Naive thymus-derived CD4-positive, alpha-beta T cell (primary cell): ENCODE measurements at regions of chr5 and their contacts with region 1.

Region 1: DNA sequence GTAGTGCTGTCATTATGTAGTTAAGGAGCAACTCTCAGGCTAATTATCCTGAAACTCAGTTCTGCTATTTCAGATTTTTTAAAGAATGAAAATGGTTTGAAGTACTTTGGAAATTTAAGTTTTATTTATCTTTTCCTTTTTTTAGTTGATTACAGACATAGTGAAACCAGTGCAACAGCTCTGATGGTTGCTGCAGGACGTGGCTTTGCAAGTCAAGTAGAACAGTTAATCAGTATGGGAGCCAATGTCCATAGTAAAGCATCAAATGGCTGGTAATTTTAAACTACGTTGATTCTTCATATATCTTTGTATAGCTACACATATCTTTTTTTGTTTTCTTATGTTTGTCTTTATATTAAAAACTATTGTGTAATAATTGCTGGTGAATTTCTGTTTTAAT is 34.9 kb downstream of the YTHDC2 start:
- DNase-seq: no peak
- ATAC-seq: no peak
- H3K4me3 ChIP-seq: no peak overlapping the region
- H3K4me3 Mint-ChIP-seq: no peak overlapping the region
- H3K27ac ChIP-seq: no peak overlapping the region
- H3K27ac Mint-ChIP-seq: no peak overlapping the region
- H3K4me1 ChIP-seq: no peaks in the 10 kb centered on the region
- H3K4me1 Mint-ChIP-seq: peaks cover 3 to 21% (median 9%) of the 10 kb centered on the region in 7 donors
- H3K27me3 ChIP-seq: no peaks in the 10 kb centered on the region
- H3K27me3 Mint-ChIP-seq: no peaks in the 10 kb centered on the region

Region 2: DNA sequence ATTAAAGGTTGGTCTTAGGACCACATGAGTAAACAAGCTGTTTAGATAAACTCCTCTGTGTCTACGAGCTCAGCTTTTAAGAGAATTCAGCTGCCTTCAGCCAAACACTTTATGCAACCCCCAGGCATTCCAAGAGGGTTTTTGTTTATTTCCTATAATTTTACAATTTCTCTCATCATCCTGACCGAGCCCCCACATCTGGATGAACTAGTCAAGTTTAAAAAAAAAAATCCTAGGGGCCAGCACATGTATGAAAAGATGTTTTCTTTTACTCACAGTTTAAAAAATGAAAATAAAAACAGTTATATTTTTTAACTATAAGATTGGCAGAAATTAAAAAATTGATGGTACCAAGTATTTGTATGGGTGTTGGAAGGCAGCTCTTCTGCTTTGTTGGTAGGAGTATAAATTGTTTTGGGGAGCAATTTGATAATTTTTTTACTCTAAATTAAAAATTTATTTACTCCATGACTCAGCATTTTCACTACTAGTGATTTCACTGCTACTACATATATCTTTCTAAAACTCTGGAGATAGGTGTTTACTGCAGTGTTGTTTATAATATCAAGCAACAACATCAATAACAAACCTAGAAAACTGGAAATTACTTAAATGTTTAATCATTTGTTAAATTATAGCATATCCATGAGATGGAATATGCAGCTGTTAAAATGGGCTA is 16.8 kb before region 1 on chr5:
- CTCF ChIA-PET with region 1: no interaction called
- POLR2A ChIA-PET with region 1: interaction called, 4 read pairs
- intact Hi-C with region 1: loop called in 1 of 2 experiments (anchors 2 kb)
- DNase-seq: no peak
- ATAC-seq: no peak
- H3K4me3 ChIP-seq: no peak overlapping the region
- H3K4me3 Mint-ChIP-seq: no peak overlapping the region
- H3K27ac ChIP-seq: no peak overlapping the region
- H3K27ac Mint-ChIP-seq: no peak overlapping the region
- H3K4me1 ChIP-seq: no peaks in the 10 kb centered on the region
- H3K4me1 Mint-ChIP-seq: peaks cover 0 to 11% (median 0%) of the 10 kb centered on the region in 7 donors
- H3K27me3 ChIP-seq: no peaks in the 10 kb centered on the region
- H3K27me3 Mint-ChIP-seq: no peaks in the 10 kb centered on the region

Region 3: DNA sequence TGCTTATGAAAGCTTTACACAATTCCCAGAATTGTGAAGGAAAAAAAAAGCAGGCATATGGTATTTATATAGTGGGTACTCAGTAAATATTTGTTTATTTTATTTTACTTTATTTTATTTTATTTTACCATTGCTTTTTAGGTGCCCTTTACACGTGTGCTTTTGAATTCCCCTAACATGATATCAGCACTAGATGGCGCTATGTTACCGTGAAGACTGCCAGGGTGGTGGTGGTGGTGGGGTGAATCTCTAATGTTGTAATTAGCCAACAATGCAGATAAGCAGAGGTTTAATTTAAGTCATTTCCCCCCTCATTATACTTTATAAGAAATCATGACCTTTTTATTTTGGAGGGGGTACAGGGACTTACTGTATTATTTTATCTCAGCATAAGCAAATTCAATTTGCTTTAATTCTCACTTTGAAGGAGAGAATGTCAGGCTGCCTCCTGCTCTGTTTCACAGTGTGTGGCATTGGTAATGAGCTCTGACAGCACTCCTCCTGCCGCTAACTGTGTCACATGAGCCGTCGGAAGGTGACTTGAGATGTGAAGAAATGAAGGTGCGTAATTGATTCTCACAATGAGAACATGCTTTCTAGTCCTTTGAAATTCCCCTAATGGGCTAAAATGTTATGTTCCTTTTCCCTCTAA is 130.7 kb after region 1 on chr5:
- CTCF ChIA-PET with region 1: no interaction called
- POLR2A ChIA-PET with region 1: no interaction called
- intact Hi-C with region 1: no loop called
- DNase-seq: peak in 4 of 9 donors; percentile 1 to 22 (median 4)
- ATAC-seq: peak; percentile 36
- H3K4me3 ChIP-seq: no peak overlapping the region
- H3K4me3 Mint-ChIP-seq: no peak overlapping the region
- H3K27ac ChIP-seq: no peak overlapping the region
- H3K27ac Mint-ChIP-seq: no peak overlapping the region
- H3K4me1 ChIP-seq: no peaks in the 10 kb centered on the region
- H3K4me1 Mint-ChIP-seq: no peaks in the 10 kb centered on the region
- H3K27me3 ChIP-seq: no peaks in the 10 kb centered on the region
- H3K27me3 Mint-ChIP-seq: peaks cover 0 to 7% (median 4%) of the 10 kb centered on the region in 5 donors